BJ (cell line): ENCODE measurements at regions of chr16 and their contacts with region 1.

Region 1: GRCh38 chr16:46762583-46762982 is 14.4 kb upstream of the MYLK3 start:
- DNase-seq: no peak
- H3K4me3 ChIP-seq: no peak overlapping the region
- H3K27me3 ChIP-seq: peaks cover 1% of the 10 kb centered on the region; the same call in 1 of the 2 replicates
- CTCF ChIP-seq: no peak

Region 2: DNA sequence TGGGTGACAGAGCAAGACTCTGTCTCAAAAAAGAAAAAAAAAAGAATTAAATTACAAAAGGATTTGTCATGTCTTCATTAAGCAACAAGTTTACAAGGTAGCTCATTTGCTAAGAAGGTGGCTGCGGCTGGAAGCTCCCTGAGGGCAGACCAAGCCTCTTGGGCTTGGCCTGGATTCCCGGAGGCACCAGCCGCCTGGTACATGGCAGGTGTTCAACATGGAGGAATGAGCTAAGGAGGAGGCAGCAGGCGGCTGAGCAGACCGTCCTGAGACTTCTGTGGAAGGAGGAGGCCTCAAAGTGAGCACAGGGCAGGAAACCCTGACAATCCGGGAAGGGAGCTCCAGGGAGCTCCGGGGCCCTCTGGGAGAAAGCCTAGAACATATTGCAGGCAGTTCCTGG is 11.2 kb before region 1 on chr16:
- CTCF ChIA-PET with region 1: no interaction called
- POLR2A ChIA-PET with region 1: no interaction called
- DNase-seq: no peak
- H3K4me3 ChIP-seq: no peak overlapping the region
- H3K27me3 ChIP-seq: peaks cover 2% of the 10 kb centered on the region; the same call in 1 of the 2 replicates
- CTCF ChIP-seq: no peak

Region 3: GRCh38 chr16:46782320-46782719 is 19.7 kb after region 1 on chr16:
- CTCF ChIA-PET with region 1: no interaction called
- POLR2A ChIA-PET with region 1: interaction called, 17 read pairs
- DNase-seq: no peak
- H3K4me3 ChIP-seq: no peak overlapping the region
- H3K27me3 ChIP-seq: peaks cover 3% of the 10 kb centered on the region; the same call in 1 of the 2 replicates
- CTCF ChIP-seq: no peak